ENCODE measurements at regions of chr2 and their contacts with region 1.

Region 1: GRCh38 chr2:128232965-128233789 is 85.5 kb downstream of the HS6ST1 start:
- DNase-seq: peak; percentile 89 to 96 (median 92)
- H3K4me3 ChIP-seq: peak overlapping the region; percentile 27 to 86 (median 78)
- H3K27ac ChIP-seq: peak overlapping the region in 4 of 5 donors; percentile 69 to 89 (median 82)
- H3K4me1 ChIP-seq: peaks cover 0 to 11% of the 10 kb centered on the region in 2 donors
- H3K27me3 ChIP-seq: no peaks in the 10 kb centered on the region
- CTCF ChIP-seq: peak; percentile 68 to 95 (median 88)
- POLR2A ChIP-seq: peak in 1 of 2 donors; percentile 57

Region 2: DNA sequence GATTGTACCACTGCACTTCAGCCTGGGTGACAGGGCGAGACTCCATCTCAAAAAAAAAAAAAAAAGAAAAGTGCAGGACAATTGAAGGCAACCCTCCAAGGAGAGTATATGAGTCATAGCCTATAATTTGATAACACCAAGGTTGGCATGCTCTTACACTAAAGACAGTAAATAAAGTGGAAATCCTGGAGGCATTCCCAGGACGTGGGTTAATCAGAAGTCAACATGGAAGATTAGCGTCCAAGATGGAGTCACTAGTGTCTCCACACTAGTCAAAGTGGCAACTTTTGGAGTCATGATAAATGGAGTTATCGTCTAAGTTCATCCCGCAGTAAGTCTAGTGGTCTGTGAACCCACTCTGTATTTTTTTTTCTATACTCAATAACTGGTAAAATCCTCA is 163.4 kb before region 1 on chr2:
- intact Hi-C with region 1: loop called in 1 of 2 experiments (anchors 10 kb)
- DNase-seq: peak; percentile 26 to 64 (median 56)
- H3K4me3 ChIP-seq: no peak overlapping the region
- H3K27ac ChIP-seq: no peak overlapping the region
- H3K4me1 ChIP-seq: no peaks in the 10 kb centered on the region
- H3K27me3 ChIP-seq: no peaks in the 10 kb centered on the region
- CTCF ChIP-seq: no peak
- POLR2A ChIP-seq: no peak

Region 3: DNA sequence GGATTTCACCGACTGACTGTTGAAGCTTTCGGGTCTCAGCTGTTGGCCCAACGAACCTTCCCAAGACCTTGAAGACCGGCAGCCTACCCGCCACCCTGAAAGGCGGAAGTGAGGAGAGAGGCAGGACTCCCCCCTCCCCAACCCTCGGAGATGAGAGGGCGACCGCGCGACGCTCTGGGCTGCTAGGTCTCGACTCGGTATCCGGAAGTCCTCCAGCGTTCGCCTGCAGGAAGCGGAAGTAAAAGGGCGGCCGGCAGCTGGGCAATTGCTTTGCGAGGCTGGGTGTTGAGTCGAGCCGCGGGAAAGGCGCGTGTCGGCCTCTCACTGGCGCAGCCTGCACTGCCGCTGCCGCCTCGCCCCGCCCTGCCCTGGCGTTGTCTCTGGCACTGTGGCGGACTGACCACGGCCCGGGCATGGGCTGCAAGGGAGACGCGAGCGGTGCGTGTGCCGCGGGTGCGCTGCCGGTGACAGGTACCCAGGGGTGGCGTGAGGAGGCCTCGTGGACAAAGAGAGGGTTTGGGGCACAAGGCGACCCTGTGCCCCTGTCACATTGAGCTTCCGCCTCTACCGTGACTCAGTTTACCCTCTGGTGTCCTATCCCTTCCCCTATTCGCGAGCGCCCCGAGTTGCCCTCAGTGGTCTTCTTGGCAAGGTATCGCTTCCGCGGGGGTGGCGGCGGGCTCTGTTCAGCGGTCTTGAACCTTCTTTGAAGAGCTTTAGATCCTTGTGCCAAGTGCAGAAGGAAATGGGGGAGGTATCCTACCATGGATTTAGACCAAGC is 142.0 kb before region 1 on chr2 and contains the start of gene UGGT1:
- intact Hi-C with region 1: no loop called
- DNase-seq: peak; percentile 92 to 97 (median 97)
- H3K4me3 ChIP-seq: peak within 1 kb of the TSS; percentile 48 to 96 (median 80)
- H3K27ac ChIP-seq: peak within 1 kb of the TSS; percentile 23 to 89 (median 71)
- H3K4me1 ChIP-seq: peaks cover 3 to 18% of the 10 kb centered on the region in 2 donors
- H3K27me3 ChIP-seq: no peaks in the 10 kb centered on the region
- CTCF ChIP-seq: peak in 1 of 6 experiments; percentile 3
- POLR2A ChIP-seq: peak; percentile 86 to 93
- total RNA-seq, gene UGGT1: 32.0 to 67.5 (median 43.2) TPM

Region 4: GRCh38 chr2:128178650-128179460 is 54.3 kb before region 1 on chr2:
- intact Hi-C with region 1: loop called (anchors 10 kb)
- DNase-seq: peak; percentile 38 to 82 (median 67)
- H3K4me3 ChIP-seq: no peak overlapping the region
- H3K27ac ChIP-seq: peak overlapping the region in 4 of 5 donors; percentile 24 to 79 (median 71)
- H3K4me1 ChIP-seq: peaks cover 6 to 16% of the 10 kb centered on the region in 2 donors
- H3K27me3 ChIP-seq: no peaks in the 10 kb centered on the region
- CTCF ChIP-seq: peak; percentile 41 to 78 (median 68)
- POLR2A ChIP-seq: no peak

Region 5: DNA sequence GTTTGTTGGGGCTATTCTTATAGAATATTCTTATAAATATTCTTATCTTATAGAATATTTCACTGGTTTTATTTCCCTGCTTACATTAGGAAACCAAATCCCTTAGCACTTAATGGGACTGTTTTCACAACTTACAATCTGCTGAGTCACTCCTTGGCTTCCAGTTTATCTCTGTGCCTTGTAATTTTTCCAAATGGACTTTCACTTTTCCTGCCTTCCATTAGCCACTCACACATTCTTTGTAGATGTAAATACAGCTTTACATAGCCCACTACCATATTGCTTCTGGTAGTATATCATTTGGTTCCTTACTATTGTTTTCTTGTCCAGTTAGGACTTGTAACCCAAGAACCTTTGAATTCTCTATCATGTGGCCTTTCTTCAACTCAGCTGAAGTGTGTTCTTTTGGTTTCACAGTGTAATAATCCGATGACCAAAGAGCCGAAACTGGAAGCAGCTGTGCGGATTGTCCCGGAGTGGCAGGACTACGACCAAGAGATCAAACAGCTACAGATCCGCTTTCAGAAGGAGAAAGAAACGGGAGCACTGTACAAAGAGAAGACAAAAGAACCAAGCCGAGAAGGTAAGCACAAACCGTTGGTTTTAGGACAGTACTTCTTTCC is 46.0 kb before region 1 on chr2:
- intact Hi-C with region 1: loop called in 1 of 2 experiments (anchors 10 kb)
- DNase-seq: no peak
- H3K4me3 ChIP-seq: no peak overlapping the region
- H3K27ac ChIP-seq: peak overlapping the region in 2 of 5 donors; percentile 18 to 20
- H3K4me1 ChIP-seq: peaks cover 0 to 9% of the 10 kb centered on the region in 2 donors
- H3K27me3 ChIP-seq: no peaks in the 10 kb centered on the region
- CTCF ChIP-seq: no peak
- POLR2A ChIP-seq: no peak

Measured in adrenal gland (tissue), 19 donors.